ENCODE measurements at regions of chr2 and their contacts with region 1.

Region 1: GRCh38 chr2:171703574-171704347 is 16.5 kb downstream of the DYNC1I2 start:
- DNase-seq: no peak
- ATAC-seq: peak; percentile 82
- H3K4me3 ChIP-seq: no peak overlapping the region
- H3K27ac ChIP-seq: no peak overlapping the region
- H3K4me1 ChIP-seq: no peaks in the 10 kb centered on the region
- H3K27me3 ChIP-seq: no peaks in the 10 kb centered on the region
- CTCF ChIP-seq: peak; percentile 43 to 53 (median 51); a peak in 5 of 6 replicates
- EP300 ChIP-seq: no peak
- POLR2A ChIP-seq: no peak
- RAD21 ChIP-seq: peak; percentile 62

Region 2: DNA sequence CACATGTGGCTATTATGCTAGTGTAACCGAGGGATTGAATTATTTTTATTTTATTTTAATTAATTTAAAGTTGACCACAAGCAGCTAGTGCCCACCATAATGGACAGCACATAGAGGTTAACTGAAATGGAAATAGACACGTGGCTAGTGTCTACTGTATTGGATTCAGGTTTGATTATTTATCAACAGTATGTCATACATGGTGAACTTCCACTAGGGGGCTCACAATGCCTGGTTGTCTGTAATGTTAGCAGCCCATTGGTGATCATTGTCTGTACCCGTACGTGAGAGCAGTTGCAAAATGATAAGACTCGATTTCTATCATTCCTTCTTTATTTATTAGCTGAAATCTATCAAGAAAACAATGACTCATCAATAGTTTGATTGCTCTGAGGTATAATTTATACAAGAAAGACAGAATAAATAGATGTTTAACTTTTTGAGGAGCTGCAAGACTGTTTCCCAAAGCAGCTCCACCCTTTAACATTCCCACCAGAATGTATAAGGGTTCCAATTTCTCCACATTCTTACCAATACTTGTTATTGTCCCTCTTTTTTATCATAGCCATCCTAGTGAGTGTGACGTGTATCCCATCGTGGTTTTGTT is 104.9 kb before region 1 on chr2:
- CTCF ChIA-PET with region 1: interaction called, 9 read pairs
- POLR2A ChIA-PET with region 1: no interaction called
- RAD21 ChIA-PET with region 1: no interaction called
- SMC1A ChIA-PET with region 1: interaction called, 5 read pairs
- in situ Hi-C with region 1: no loop called
- intact Hi-C with region 1: loop called (anchors 5 kb)
- DNase-seq: peak; percentile 24
- ATAC-seq: peak; percentile 100
- H3K4me3 ChIP-seq: no peak overlapping the region
- H3K27ac ChIP-seq: no peak overlapping the region
- H3K4me1 ChIP-seq: no peaks in the 10 kb centered on the region
- H3K27me3 ChIP-seq: no peaks in the 10 kb centered on the region
- CTCF ChIP-seq: peak; percentile 71 to 85 (median 82)
- EP300 ChIP-seq: no peak
- POLR2A ChIP-seq: no peak
- RAD21 ChIP-seq: peak; percentile 77

Region 3: GRCh38 chr2:171723724-171724683 is 20.2 kb after region 1 on chr2:
- CTCF ChIA-PET with region 1: interaction called, 20 read pairs
- POLR2A ChIA-PET with region 1: no interaction called
- RAD21 ChIA-PET with region 1: interaction called, 4 read pairs
- SMC1A ChIA-PET with region 1: interaction called, 7 read pairs
- in situ Hi-C with region 1: no loop called
- intact Hi-C with region 1: no loop called
- DNase-seq: no peak
- ATAC-seq: no peak
- H3K4me3 ChIP-seq: no peak overlapping the region
- H3K27ac ChIP-seq: no peak overlapping the region
- H3K4me1 ChIP-seq: no peaks in the 10 kb centered on the region
- H3K27me3 ChIP-seq: no peaks in the 10 kb centered on the region
- CTCF ChIP-seq: no peak
- EP300 ChIP-seq: no peak
- POLR2A ChIP-seq: no peak
- RAD21 ChIP-seq: no peak

Region 4: GRCh38 chr2:172102391-172103278 is 398.9 kb after region 1 on chr2 and contains the start of gene DLX2:
- CTCF ChIA-PET with region 1: interaction called, 212 read pairs
- POLR2A ChIA-PET with region 1: interaction called, 5 read pairs
- RAD21 ChIA-PET with region 1: interaction called, 18 read pairs
- SMC1A ChIA-PET with region 1: interaction called, 111 read pairs
- in situ Hi-C with region 1: loop called (anchors 5 kb)
- intact Hi-C with region 1: loop called (anchors 1 kb)
- DNase-seq: no peak
- ATAC-seq: peak; percentile 82
- H3K4me3 ChIP-seq: peak within 1 kb of the TSS; percentile 56
- H3K27ac ChIP-seq: no peak within 1 kb of the TSS
- H3K4me1 ChIP-seq: peaks cover 30% of the 10 kb centered on the region
- H3K27me3 ChIP-seq: peaks cover 27 to 39% of the 10 kb centered on the region in 2 experiments
- CTCF ChIP-seq: no peak
- EP300 ChIP-seq: no peak
- POLR2A ChIP-seq: peak; percentile 47; the same call in 1 of the 2 replicates
- RAD21 ChIP-seq: no peak
- polyA plus RNA-seq, gene DLX2: not detected

Region 5: GRCh38 chr2:172131713-172132555 is 428.2 kb after region 1 on chr2:
- CTCF ChIA-PET with region 1: interaction called, 33 read pairs
- POLR2A ChIA-PET with region 1: no interaction called
- RAD21 ChIA-PET with region 1: interaction called, 12 read pairs
- SMC1A ChIA-PET with region 1: interaction called, 23 read pairs
- in situ Hi-C with region 1: no loop called
- intact Hi-C with region 1: no loop called
- DNase-seq: no peak
- ATAC-seq: no peak
- H3K4me3 ChIP-seq: no peak overlapping the region
- H3K27ac ChIP-seq: no peak overlapping the region
- H3K4me1 ChIP-seq: no peaks in the 10 kb centered on the region
- H3K27me3 ChIP-seq: peaks cover 0 to 2% of the 10 kb centered on the region in 2 experiments; a peak in 2 of 4 replicates
- CTCF ChIP-seq: no peak
- EP300 ChIP-seq: no peak
- POLR2A ChIP-seq: no peak
- RAD21 ChIP-seq: no peak